ENCODE measurements at regions of chr16 and their contacts with region 1.

Region 1: DNA sequence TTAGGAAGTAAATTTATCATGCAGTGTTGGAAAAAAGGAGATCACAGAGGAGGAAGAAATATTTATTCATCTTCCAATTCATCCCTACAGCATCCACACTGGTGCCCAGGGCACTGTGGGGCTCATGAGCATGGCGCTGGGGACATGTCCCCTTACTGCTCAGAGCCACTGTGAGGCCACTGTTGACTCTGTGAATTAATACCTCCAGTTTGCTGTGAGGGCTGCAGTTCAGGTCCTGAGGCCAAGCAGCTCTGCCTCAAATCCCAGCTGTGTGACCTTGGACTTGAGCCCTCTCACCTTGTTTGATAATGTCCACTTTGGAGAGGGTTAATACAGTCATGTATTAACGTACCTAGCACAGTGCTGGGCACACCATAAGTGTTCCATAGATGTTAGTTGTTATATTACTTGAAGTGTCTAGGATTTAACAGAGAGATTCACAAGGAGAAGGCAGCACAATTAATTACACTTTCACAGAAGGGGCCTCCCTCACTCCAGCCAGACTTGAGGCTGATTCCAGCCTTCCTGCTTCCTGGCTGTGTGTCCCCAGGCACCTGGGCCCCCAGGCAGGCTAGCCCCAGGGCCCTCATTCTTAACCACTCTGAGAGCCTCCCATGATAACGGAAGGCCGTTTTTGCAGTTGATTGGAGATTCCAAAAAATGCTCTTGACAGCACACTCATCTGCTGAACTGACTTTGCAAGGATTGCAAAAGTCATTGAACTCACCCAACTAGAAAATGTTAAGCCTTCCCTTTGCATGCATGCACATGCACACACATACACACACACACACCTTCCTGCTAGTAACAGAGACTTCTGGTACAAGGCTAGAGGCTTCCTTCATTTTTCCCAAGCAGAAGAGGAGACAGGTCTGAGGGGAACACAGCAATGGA is 29.4 kb downstream of the KATNIP start:
- DNase-seq: peak; percentile 89
- ATAC-seq: peak; percentile 97
- H3K4me3 ChIP-seq: peak overlapping the region in 1 of 3 experiments; percentile 23; a peak in 1 of 6 replicates
- H3K27ac ChIP-seq: peak overlapping the region; percentile 71
- H3K4me1 ChIP-seq: peaks cover 27% of the 10 kb centered on the region
- H3K27me3 ChIP-seq: no peaks in the 10 kb centered on the region
- CTCF ChIP-seq: no peak; the same call in 1 of the 2 replicates
- EP300 ChIP-seq: peak in 1 of 2 experiments; percentile 54; a peak in 2 of 4 replicates
- POLR2A ChIP-seq: peak; percentile 24 to 63; a peak in 2 of 4 replicates
- RAD21 ChIP-seq: no peak

Region 2: DNA sequence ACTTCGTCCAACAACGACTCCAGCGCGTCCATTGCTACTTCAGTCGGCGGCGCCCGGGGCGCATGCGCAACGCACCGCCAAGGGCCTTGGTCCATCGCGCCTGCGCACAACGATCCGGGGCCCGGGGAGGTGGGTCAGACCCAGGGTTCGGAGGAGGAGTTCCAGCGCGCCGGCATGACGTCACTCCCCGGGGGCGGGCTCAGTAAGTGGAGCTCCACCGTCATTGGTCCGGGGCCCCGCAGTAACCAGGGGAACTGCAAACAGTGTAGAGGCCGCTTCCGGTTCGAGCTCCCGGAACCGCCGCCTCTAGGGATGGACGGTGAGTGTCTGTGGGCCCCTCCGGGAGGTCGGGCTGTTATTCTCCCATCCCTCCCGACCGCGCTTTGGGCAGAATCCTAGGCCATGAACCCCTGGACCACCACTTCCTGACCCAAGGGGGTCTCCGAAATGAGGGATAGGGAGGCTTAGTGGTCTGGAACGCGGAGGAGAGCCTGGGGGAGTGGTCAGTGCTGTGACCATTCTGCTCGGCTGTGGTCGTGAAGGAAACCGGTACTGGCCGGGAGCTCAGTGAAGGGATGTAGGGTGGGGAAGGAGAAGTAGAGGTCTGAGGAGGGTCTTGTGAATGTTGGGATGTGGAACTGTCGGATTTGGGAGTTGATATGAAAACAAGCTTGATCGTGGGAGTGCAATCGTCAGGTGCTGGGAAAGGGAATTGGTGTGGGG is 29.3 kb before region 1 on chr16 and contains the starts of genes GTF3C1 and KATNIP:
- CTCF ChIA-PET with region 1: no interaction called
- POLR2A ChIA-PET with region 1: interaction called, 36 read pairs
- in situ Hi-C with region 1: no loop called
- intact Hi-C with region 1: loop called (anchors 2 kb)
- DNase-seq: peak; percentile 98
- ATAC-seq: peak; percentile 99
- H3K4me3 ChIP-seq: peak within 1 kb of the TSS; percentile 85 to 98 (median 94)
- H3K27ac ChIP-seq: peak within 1 kb of the TSS; percentile 64
- H3K4me1 ChIP-seq: peaks cover 34% of the 10 kb centered on the region
- H3K27me3 ChIP-seq: no peaks in the 10 kb centered on the region; a peak in 1 of 5 replicates
- CTCF ChIP-seq: no peak
- EP300 ChIP-seq: no peak
- POLR2A ChIP-seq: peak; percentile 90 to 93
- RAD21 ChIP-seq: no peak
- total RNA-seq, gene GTF3C1: 44.9 and 72.7 TPM in 2 replicates
- total RNA-seq, gene KATNIP: 11.8 and 12.0 TPM in 2 replicates

Region 3: DNA sequence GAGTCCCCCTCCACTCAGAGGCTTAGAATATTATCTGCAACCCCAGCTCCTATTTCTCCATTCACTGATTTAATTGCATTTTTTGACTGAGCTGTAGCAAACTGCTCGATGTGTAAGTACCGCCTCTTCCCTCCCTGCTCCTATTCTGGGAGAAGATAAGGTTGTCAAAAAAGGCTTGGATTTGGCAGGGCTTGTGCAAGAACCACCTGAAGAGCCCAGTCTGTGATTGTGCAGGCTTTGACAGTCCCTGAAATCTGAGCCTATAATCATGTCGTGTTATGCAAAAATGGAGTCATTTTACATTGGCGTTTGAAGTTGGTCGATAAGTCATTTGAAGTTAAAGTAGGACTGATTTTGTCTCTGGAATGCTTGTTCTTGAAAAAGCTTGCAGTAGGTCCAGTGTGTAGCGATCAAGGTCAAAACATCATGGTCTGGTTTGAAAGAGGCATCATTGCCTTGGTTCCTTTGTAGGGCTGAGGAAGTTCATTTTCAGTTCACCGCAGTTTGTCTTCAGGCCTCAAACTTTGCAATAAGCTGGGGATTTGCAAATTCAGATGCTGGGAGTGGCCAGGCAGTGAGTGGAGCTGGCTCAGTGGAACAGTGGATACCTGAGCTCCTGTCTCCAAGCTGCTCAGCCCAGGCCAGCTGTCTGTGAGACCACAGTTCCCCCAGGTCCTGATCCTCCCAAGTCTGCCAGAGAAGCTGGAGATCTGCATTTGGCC is 39.4 kb after region 1 on chr16:
- CTCF ChIA-PET with region 1: no interaction called
- POLR2A ChIA-PET with region 1: no interaction called
- in situ Hi-C with region 1: no loop called
- intact Hi-C with region 1: no loop called
- DNase-seq: peak; percentile 31
- ATAC-seq: peak; percentile 56
- H3K4me3 ChIP-seq: no peak overlapping the region
- H3K27ac ChIP-seq: no peak overlapping the region
- H3K4me1 ChIP-seq: peaks cover 29% of the 10 kb centered on the region
- H3K27me3 ChIP-seq: no peaks in the 10 kb centered on the region
- CTCF ChIP-seq: no peak
- EP300 ChIP-seq: no peak
- POLR2A ChIP-seq: no peak
- RAD21 ChIP-seq: no peak